Activated B cell treated with CpG ODN at 0.5 μM for 24 hours (primary cell): ENCODE measurements at regions of chr14 and their contacts with region 1.

Region 1: DNA sequence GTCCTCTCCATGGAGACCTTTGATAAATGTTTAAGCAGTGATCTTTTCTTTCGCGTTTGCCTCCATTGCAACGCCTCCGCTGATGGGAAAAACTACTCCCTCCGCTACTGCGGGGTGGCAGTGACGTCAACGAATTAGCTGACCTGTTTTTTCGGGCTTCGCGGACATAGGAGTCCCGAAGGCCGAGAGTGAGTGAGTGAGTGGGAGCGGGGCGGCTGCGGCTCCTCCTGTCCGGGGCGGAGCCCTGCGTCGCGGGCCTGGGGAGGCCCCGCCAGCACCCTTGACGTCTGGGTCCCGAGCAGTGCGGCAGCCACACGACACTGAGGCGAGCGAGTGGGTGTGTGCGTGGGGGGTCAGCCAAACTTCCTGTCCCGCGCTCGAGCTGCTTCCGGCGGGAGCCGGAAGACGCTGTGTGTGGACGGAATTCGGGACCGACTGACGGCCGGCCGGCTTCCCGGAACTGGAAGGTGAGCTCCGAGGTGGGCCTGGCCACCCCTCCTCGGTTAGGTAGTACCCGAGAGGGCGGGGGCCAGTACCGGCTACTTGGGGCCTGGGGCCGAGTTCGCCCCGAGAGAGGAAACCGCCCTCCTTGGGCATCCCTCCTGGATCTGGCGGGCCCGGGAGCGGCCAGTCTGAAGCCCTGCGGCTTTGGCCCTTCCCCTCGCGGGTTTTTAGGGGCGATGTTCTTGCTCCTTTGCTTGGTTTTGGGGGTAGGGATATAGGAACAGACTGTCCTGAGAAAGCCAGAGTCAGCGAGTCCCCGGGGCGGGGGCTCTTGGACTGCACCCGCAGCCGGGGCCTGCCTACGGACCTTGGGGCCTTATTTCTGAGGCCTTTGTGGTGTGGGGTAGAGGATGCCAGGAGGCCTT is at the start of gene ZNF410:
- DNase-seq: peak; percentile 79
- ATAC-seq: peak; percentile 98
- H3K4me3 Mint-ChIP-seq: peak within 1 kb of the TSS; percentile 96
- H3K27ac Mint-ChIP-seq: peak within 1 kb of the TSS; percentile 96
- H3K4me1 Mint-ChIP-seq: peaks cover 42% of the 10 kb centered on the region
- H3K27me3 Mint-ChIP-seq: no peaks in the 10 kb centered on the region
- CTCF ChIP-seq: no peak
- total RNA-seq, gene ZNF410: 58.4 and 64.7 TPM in 2 replicates

Region 2: DNA sequence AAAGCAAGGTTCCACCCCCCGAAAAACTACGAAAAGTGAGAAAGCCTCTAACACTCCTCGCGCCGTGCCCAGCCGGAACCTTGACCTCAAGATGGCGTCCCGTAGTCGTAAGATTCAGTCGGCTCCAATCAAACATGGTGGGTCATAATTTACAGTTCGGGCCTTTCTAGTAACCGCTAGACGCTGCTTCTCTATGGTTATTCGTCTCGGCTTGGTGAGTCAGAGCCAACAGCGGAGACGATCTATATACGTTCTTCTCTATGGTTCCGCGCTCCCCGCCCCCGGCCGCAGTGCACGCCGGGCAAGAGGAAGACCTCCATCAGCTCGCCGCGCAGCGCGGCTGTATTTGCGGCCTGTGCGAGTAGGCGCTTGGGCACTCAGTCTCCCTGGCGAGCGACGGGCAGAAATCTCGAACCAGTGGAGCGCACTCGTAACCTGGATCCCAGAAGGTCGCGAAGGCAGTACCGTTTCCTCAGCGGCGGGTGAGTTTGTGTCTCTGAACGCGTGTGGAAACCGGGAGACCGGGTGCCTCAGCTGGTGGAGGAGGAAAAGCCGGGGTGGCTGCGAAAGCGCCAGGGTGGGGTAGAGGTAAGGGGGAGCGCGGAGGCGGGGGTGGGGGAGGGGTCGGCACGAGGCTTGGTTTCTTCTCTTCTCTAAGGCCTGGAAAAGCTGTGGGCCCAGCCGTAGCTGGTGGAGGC is 828.3 kb before region 1 on chr14 and contains the start of gene RBM25:
- CTCF ChIA-PET with region 1: no interaction called
- POLR2A ChIA-PET with region 1: interaction called, 10 read pairs
- intact Hi-C with region 1: loop called (anchors 1 kb)
- DNase-seq: peak; percentile 90
- ATAC-seq: peak; percentile 93
- H3K4me3 Mint-ChIP-seq: no peak within 1 kb of the TSS
- H3K27ac Mint-ChIP-seq: no peak within 1 kb of the TSS
- H3K4me1 Mint-ChIP-seq: peaks cover 42% of the 10 kb centered on the region
- H3K27me3 Mint-ChIP-seq: no peaks in the 10 kb centered on the region
- CTCF ChIP-seq: no peak
- total RNA-seq, gene RBM25: 114 and 123 TPM in 2 replicates

Region 3: DNA sequence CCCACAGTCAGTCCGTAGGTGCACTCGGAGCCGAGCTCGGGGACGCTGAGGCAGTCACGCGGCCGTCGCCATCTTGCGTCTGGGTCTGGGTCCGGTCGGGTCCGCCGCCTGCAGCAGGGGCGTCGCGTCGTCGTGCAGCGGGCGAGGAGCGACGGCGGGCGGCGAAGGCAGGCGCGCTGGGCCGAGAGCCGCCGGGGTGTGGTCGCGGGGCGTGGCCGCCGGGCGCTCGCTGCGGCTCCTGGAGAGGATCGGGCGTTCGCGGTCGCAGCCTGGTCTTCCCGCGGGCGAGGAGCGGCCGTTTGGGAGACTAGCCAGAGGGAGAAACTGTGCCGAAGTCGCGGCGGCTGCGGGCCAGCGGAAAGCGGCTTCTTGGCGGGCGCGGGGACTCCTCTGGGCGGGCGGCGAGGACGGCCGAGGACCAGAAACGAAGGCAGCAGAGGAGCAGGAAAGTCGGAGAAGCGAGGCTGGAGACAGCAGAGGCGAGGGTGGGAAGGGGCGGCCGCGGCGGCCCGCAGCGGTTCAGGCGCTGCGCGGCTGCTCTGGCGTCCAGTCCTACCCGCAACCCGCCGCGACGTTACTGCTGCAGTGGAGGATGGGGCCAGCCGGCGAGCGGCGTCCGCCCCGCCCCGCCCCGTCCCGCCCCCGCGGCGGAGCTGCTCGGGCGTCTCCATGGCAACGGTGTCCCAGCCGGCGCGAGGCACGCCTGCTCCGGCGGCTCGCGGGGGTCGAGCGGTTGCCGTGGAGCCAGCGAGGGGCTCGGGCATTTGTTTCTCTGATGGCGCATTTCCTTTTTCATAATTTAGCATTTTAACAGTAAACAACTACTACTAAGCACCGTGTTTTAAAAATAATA is 172.7 kb before region 1 on chr14 and contains the start of gene PNMA1:
- CTCF ChIA-PET with region 1: no interaction called
- POLR2A ChIA-PET with region 1: interaction called, 5 read pairs
- intact Hi-C with region 1: loop called (anchors 1 kb)
- DNase-seq: peak; percentile 86
- ATAC-seq: peak; percentile 80
- H3K4me3 Mint-ChIP-seq: peak within 1 kb of the TSS; percentile 95
- H3K27ac Mint-ChIP-seq: peak within 1 kb of the TSS; percentile 92
- H3K4me1 Mint-ChIP-seq: peaks cover 25% of the 10 kb centered on the region
- H3K27me3 Mint-ChIP-seq: no peaks in the 10 kb centered on the region
- CTCF ChIP-seq: no peak
- total RNA-seq, gene PNMA1: 19.9 and 22.2 TPM in 2 replicates

Region 4: DNA sequence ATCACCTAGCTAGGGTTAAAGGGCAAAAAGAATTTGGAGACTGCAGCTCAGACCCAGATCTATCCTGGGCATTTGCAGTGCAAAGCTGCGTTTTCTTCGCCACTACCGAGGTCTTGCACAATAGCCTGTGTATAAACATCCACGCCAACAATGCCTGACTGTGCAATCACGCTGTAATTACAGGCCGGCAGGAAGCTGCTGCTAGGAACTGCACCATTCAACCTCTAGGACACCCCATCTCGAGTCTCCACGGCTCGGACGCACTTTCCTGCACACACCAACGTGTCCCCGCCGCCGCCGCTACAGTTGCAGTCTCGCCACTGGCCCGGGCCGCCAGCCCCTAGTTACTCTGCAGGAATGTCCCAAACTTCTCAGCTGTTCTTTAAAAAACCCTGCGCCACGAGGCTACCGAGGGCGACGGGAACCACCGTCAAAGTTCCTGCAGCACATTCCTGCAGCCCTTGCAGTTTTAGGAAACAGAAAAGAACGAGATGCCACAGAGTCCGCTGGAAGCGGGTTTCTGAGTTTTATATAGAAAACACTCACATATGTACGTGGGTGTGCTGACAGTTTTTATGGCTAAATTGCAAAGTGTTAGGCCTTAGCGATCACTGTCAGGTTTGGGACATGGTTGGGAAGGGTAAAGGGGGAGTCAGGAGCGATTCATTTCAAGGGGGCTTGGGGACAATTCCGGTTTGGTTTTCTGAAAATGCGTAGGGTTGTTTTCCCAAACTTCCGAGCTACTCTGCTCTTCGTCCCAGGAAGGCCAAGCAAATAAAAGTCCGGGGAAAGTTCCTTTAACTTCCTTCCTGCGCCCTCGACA is 100.6 kb before region 1 on chr14:
- CTCF ChIA-PET with region 1: no interaction called
- POLR2A ChIA-PET with region 1: interaction called, 8 read pairs
- intact Hi-C with region 1: loop called (anchors 1 kb)
- DNase-seq: peak; percentile 51
- ATAC-seq: peak; percentile 42
- H3K4me3 Mint-ChIP-seq: peak overlapping the region; percentile 93
- H3K27ac Mint-ChIP-seq: peak overlapping the region; percentile 89
- H3K4me1 Mint-ChIP-seq: peaks cover 59% of the 10 kb centered on the region
- H3K27me3 Mint-ChIP-seq: no peaks in the 10 kb centered on the region
- CTCF ChIP-seq: no peak

Region 5: DNA sequence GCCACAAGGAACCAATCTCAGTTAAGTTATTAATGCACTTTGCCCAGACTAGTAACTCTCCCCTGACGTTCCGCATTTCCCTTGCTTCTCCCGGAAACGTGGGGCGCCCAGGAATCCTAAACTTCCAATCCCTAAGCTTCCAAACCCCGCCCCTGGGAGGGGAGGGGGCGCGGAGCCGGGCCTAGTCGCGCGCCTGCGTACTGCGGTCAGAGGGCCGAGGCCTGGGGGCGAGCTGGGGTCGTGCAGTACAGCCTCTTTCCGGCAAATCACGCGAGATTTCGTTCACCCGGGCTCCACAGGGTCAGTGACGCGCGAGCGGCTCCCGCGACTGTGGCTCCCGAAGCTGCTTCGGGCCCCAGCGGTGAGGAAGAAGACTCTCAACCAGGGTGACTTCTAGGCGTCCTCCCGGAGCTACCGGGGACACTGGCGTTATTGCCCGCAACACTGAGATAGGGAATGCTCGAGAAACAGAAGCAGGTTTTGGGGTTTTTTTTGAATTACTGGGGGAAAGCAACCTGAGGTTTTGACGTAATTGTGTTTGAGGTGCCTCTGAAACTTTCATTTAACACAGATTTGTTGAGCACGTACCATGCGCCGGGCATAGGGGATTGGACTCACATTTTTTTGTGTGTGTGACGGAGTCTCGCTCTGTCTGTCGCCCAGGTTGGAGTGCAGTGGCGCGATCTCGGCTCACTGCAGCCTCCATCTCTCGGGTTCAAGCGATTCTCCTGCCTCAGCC is 34.9 kb before region 1 on chr14 and contains the start of gene PTGR2:
- CTCF ChIA-PET with region 1: no interaction called
- POLR2A ChIA-PET with region 1: interaction called, 30 read pairs
- intact Hi-C with region 1: loop called (anchors 1 kb)
- DNase-seq: peak; percentile 81
- ATAC-seq: peak; percentile 96
- H3K4me3 Mint-ChIP-seq: peak within 1 kb of the TSS; percentile 93
- H3K27ac Mint-ChIP-seq: peak within 1 kb of the TSS; percentile 96
- H3K4me1 Mint-ChIP-seq: peaks cover 21% of the 10 kb centered on the region
- H3K27me3 Mint-ChIP-seq: no peaks in the 10 kb centered on the region
- CTCF ChIP-seq: no peak
- total RNA-seq, gene PTGR2: 4.6 and 4.8 TPM in 2 replicates

Region 6: DNA sequence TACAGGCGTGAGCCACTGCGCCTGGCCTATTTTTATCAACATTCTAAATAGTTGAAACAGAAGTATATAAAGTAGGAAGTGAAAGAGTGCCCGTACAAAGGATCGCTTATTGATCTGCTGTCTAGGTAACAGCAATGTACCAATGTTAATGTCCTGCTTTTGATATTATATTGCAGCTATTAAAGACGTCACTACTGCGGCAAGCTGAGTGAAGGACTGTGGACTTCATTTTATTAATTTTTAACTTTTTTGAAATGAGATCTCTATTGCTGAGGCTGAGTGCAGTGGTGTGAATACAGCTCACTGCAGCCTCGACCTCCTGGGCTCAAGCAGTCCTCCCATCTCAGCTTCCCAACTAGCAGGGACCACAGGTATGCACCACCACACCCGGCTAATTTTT is 24.2 kb before region 1 on chr14:
- CTCF ChIA-PET with region 1: no interaction called
- POLR2A ChIA-PET with region 1: no interaction called
- intact Hi-C with region 1: no loop called
- DNase-seq: no peak
- ATAC-seq: no peak
- H3K4me3 Mint-ChIP-seq: no peak overlapping the region
- H3K27ac Mint-ChIP-seq: no peak overlapping the region
- H3K4me1 Mint-ChIP-seq: no peaks in the 10 kb centered on the region
- H3K27me3 Mint-ChIP-seq: no peaks in the 10 kb centered on the region
- CTCF ChIP-seq: no peak

Region 7: GRCh38 chr14:73935666-73936065 is 49.0 kb after region 1 on chr14:
- CTCF ChIA-PET with region 1: no interaction called
- POLR2A ChIA-PET with region 1: no interaction called
- intact Hi-C with region 1: no loop called
- DNase-seq: no peak
- ATAC-seq: no peak
- H3K4me3 Mint-ChIP-seq: no peak overlapping the region
- H3K27ac Mint-ChIP-seq: no peak overlapping the region
- H3K4me1 Mint-ChIP-seq: no peaks in the 10 kb centered on the region
- H3K27me3 Mint-ChIP-seq: no peaks in the 10 kb centered on the region
- CTCF ChIP-seq: no peak

Region 8: GRCh38 chr14:74018586-74019407 is 132.1 kb after region 1 on chr14 and contains the starts of genes BBOF1 and ENTPD5:
- CTCF ChIA-PET with region 1: no interaction called
- POLR2A ChIA-PET with region 1: interaction called, 3 read pairs
- intact Hi-C with region 1: loop called (anchors 2 kb)
- DNase-seq: peak; percentile 82
- ATAC-seq: peak; percentile 96
- H3K4me3 Mint-ChIP-seq: peak within 1 kb of the TSS; percentile 95
- H3K27ac Mint-ChIP-seq: peak within 1 kb of the TSS; percentile 88
- H3K4me1 Mint-ChIP-seq: peaks cover 14% of the 10 kb centered on the region
- H3K27me3 Mint-ChIP-seq: no peaks in the 10 kb centered on the region
- CTCF ChIP-seq: no peak
- total RNA-seq, gene BBOF1: 1.6 and 2.2 TPM in 2 replicates
- total RNA-seq, gene ENTPD5: 9.3 and 10.4 TPM in 2 replicates

Region 9: DNA sequence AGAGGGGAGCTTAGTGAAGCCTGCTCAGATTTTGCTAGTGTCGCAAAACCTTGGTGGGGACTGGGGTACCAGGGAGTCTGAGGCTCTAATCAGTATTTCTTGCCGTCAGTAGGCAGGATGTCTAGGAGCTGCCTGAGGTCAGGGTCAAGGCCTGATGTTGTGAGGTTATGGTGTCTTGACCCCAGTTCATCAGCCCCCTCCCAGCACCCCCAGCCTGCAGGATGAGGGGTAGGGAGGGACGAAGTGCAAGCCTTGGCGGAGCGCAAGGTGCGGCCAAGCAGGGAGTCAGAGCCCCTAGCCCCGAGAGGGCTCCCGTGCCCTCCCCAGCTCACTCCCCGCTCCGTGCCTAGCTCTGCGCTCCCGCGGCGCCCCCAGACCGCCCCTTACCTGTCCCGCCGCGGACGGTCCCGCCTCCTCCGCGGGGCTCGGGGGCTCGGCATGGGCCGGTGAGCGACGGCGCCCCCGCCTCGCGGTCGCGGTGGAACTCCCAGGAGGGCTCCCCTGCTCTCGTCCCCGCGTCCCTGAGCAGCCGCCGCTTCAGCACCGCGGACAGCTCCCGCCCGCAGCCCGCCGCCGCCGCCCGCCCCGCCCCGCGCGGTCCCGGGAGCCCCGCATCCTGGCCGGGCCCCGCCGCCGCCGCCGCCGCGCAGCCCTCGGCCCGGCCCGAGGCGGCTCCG is 539.0 kb after region 1 on chr14:
- CTCF ChIA-PET with region 1: no interaction called
- POLR2A ChIA-PET with region 1: no interaction called
- intact Hi-C with region 1: no loop called
- DNase-seq: peak; percentile 60
- ATAC-seq: peak; percentile 77
- H3K4me3 Mint-ChIP-seq: no peak overlapping the region
- H3K27ac Mint-ChIP-seq: no peak overlapping the region
- H3K4me1 Mint-ChIP-seq: peaks cover 2% of the 10 kb centered on the region
- H3K27me3 Mint-ChIP-seq: peaks cover 50% of the 10 kb centered on the region
- CTCF ChIP-seq: no peak